Calu3 (cell line): ENCODE measurements at regions of chr22 and their contacts with region 1.

Region 1: GRCh38 chr22:29167032-29167911 is 38.4 kb upstream of the EMID1 start:
- DNase-seq: no peak
- H3K4me3 Mint-ChIP-seq: no peak overlapping the region
- H3K27ac Mint-ChIP-seq: no peak overlapping the region
- H3K4me1 Mint-ChIP-seq: no peaks in the 10 kb centered on the region
- H3K27me3 Mint-ChIP-seq: peaks cover 60% of the 10 kb centered on the region
- CTCF ChIP-seq: no peak

Region 2: GRCh38 chr22:28819253-28820096 is 347.8 kb before region 1 on chr22:
- CTCF ChIA-PET with region 1: interaction called, 12 read pairs
- intact Hi-C with region 1: no loop called
- DNase-seq: peak; percentile 60
- H3K4me3 Mint-ChIP-seq: peak overlapping the region; percentile 13
- H3K27ac Mint-ChIP-seq: peak overlapping the region; percentile 96
- H3K4me1 Mint-ChIP-seq: peaks cover 25% of the 10 kb centered on the region
- H3K27me3 Mint-ChIP-seq: no peaks in the 10 kb centered on the region
- CTCF ChIP-seq: no peak

Region 3: DNA sequence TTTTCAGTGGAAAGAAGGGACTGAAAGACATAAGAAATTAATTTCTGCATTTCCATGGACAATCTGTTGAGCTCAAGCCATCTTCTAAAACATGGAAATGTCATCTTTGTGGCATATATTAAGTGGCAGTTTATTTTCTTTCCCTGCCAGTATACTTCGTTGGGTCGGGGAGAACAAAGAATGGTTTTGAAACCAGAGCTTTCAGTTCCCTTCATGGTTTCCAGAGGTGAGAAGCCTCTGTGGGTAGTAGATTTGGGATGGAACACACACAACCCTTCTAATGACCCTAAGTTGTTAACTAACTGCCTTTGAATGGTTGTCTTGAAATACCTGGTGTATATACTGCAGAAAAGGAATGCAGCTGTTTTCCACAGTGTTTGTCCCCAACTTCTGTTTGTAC is 121.6 kb after region 1 on chr22:
- CTCF ChIA-PET with region 1: no interaction called
- intact Hi-C with region 1: no loop called
- DNase-seq: no peak
- H3K4me3 Mint-ChIP-seq: no peak overlapping the region
- H3K27ac Mint-ChIP-seq: no peak overlapping the region
- H3K4me1 Mint-ChIP-seq: no peaks in the 10 kb centered on the region
- H3K27me3 Mint-ChIP-seq: no peaks in the 10 kb centered on the region
- CTCF ChIP-seq: no peak

Region 4: GRCh38 chr22:29320546-29320945 is 153.3 kb after region 1 on chr22:
- CTCF ChIA-PET with region 1: no interaction called
- intact Hi-C with region 1: no loop called
- DNase-seq: no peak
- H3K4me3 Mint-ChIP-seq: no peak overlapping the region
- H3K27ac Mint-ChIP-seq: no peak overlapping the region
- H3K4me1 Mint-ChIP-seq: no peaks in the 10 kb centered on the region
- H3K27me3 Mint-ChIP-seq: peaks cover 19% of the 10 kb centered on the region
- CTCF ChIP-seq: no peak